ENCODE measurements at regions of chr15 and their contacts with region 1.

Region 1: DNA sequence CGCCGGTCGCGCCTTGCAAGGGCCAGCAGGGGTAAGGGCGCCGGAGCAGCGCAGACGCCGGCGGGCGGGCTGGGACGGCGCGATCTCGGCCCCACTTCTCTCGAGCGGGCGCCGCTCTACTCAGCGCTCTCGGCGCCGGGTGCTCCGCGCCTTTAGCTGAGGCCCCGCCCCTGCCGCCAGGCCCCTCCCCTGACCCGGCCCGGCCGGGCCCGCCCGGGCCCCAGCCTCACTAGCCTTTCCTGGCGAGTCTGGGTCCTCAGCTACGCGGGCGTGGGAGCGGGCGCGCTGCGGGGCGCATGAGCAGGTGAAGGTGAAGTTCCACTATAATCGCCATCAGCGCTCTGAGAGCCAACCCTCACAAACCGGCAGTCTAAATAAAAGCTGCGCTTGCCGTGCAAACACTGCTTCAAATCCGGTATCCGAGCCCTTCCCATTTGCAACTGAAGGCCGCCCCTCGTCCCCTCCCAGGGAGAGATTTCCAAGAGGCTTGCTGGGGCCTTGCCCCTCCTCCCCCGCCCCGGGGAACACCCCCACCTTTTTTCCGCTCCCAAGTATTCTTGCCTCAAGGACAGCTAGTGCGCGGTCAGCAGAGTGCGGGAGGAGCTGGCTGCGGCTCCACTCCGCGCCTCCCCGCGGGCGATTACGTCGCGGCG is at the start of gene RPP25:
- DNase-seq: peak; percentile 80
- H3K4me3 Mint-ChIP-seq: peak within 1 kb of the TSS; percentile 63
- H3K27ac Mint-ChIP-seq: no peak within 1 kb of the TSS
- H3K4me1 Mint-ChIP-seq: peaks cover 50% of the 10 kb centered on the region
- H3K27me3 Mint-ChIP-seq: peaks cover 21% of the 10 kb centered on the region
- total RNA-seq, gene RPP25: 3.8 TPM

Region 2: DNA sequence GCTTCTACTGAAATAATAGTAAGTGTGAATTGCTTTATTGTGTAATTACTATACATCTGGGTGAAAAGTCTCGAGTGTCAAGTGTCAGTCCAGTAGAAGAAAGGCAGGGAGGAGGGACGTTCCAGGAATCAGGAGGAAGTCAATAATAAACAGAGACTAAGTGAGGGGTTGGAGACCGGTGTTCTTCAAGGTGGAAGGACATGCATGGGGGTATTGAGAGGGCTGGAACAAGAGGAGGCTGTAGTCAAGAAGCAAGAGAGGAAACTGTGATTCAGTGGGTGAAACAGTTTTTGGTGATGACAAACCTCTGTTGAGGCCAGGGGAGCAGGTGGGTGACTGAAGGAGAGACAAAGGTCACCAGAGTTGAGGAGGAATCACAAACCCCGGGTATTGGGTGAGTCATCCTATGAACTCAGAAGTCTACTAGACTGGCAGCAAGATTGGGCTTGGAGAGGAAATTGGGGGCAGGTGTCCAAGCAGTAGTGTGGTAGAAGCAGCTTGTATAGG is 27.0 kb after region 1 on chr15:
- CTCF ChIA-PET with region 1: interaction called, 5 read pairs
- POLR2A ChIA-PET with region 1: interaction called, 4 read pairs
- intact Hi-C with region 1: loop called (anchors 1 kb)
- DNase-seq: peak; percentile 78
- H3K4me3 Mint-ChIP-seq: no peak overlapping the region
- H3K27ac Mint-ChIP-seq: peak overlapping the region; percentile 46
- H3K4me1 Mint-ChIP-seq: peaks cover 11% of the 10 kb centered on the region
- H3K27me3 Mint-ChIP-seq: peaks cover 24% of the 10 kb centered on the region

Region 3: GRCh38 chr15:75215107-75216004 is 258.6 kb after region 1 on chr15:
- CTCF ChIA-PET with region 1: no interaction called
- POLR2A ChIA-PET with region 1: no interaction called
- intact Hi-C with region 1: no loop called
- DNase-seq: no peak
- H3K4me3 Mint-ChIP-seq: no peak overlapping the region
- H3K27ac Mint-ChIP-seq: no peak overlapping the region
- H3K4me1 Mint-ChIP-seq: no peaks in the 10 kb centered on the region
- H3K27me3 Mint-ChIP-seq: no peaks in the 10 kb centered on the region

Measured in activated CD4-positive, alpha-beta memory T cell treated with anti-CD3 and anti-CD28 coated beads for 36 hours (primary cell).